K562 (cell line): ENCODE measurements at regions of chr12 and their contacts with region 1.

Region 1: GRCh38 chr12:50763639-50764285 is at the start of gene ATF1:
- DNase-seq: peak; percentile 88 to 97 (median 91)
- ATAC-seq: peak; percentile 87
- H3K4me3 ChIP-seq: peak within 1 kb of the TSS; percentile 84
- H3K27ac ChIP-seq: peak within 1 kb of the TSS; percentile 99
- H3K4me1 ChIP-seq: peaks cover 17 to 18% of the 10 kb centered on the region in 2 experiments
- H3K27me3 ChIP-seq: no peaks in the 10 kb centered on the region
- CTCF ChIP-seq: no peak
- EP300 ChIP-seq: peak; percentile 37; the same call in 1 of the 2 replicates
- POLR2A ChIP-seq: peak; percentile 93
- RAD21 ChIP-seq: no peak
- polyA plus RNA-seq, gene ATF1: 19.8 to 24.5 TPM

Region 2: DNA sequence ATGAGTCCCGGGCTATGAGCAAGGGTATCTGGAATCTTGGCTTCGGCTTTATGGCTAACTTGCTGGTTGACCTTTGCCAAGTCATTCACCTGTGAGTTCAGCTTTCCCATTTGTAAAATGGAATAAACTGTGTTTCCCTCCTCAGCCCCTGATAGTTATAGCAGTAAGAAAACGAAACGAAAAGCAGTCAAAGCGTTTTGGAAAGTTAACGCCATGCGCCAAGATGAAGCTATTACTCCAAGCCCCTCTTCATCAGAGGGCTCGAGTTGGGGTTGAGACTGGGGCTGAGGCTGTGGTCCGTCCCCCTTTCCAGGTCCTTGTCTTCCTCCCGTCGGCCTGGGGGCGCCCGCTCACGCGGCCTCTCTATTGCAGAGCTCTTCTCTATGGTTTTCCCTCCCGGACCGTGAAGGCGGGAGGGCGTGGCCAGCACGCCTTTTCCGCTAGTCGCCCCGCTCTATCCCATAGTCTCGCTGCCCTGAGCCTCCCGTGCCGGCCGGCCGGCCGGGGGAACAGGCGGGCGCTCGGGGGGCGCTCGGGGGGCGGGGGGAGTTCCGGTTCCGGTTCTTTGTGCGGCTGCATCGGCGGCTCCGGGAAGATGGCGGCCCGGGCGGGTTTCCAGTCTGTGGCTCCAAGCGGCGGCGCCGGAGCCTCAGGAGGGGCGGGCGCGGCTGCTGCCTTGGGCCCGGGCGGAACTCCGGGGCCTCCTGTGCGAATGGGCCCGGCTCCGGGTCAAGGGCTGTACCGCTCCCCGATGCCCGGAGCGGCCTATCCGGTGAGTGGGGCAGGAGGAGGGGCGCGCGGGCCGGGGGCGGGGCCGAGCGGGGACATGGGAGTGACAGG is 678.8 kb before region 1 on chr12 and contains the start of gene SMARCD1:
- CTCF ChIA-PET with region 1: no interaction called
- POLR2A ChIA-PET with region 1: no interaction called
- in situ Hi-C with region 1: no loop called
- intact Hi-C with region 1: loop called (anchors 5 kb)
- DNase-seq: peak; percentile 92 to 96 (median 93)
- ATAC-seq: peak; percentile 96
- H3K4me3 ChIP-seq: peak within 1 kb of the TSS; percentile 82
- H3K27ac ChIP-seq: peak within 1 kb of the TSS; percentile 84
- H3K4me1 ChIP-seq: peaks cover 10 to 21% of the 10 kb centered on the region in 2 experiments; a peak in 4 of 5 replicates
- H3K27me3 ChIP-seq: no peaks in the 10 kb centered on the region
- CTCF ChIP-seq: peak; percentile 75 to 88 (median 86)
- EP300 ChIP-seq: peak; percentile 39; the same call in 1 of the 2 replicates
- POLR2A ChIP-seq: peak; percentile 60; the same call in 1 of the 2 replicates
- RAD21 ChIP-seq: peak in 1 of 2 experiments; percentile 20; a peak in 1 of 4 replicates
- polyA plus RNA-seq, gene SMARCD1: 0.86 to 1.5 TPM

Region 3: GRCh38 chr12:50677858-50678257 is 85.9 kb before region 1 on chr12:
- CTCF ChIA-PET with region 1: no interaction called
- POLR2A ChIA-PET with region 1: no interaction called
- in situ Hi-C with region 1: no loop called
- intact Hi-C with region 1: no loop called
- DNase-seq: no peak
- ATAC-seq: no peak
- H3K4me3 ChIP-seq: no peak overlapping the region
- H3K27ac ChIP-seq: no peak overlapping the region
- H3K4me1 ChIP-seq: no peaks in the 10 kb centered on the region
- H3K27me3 ChIP-seq: no peaks in the 10 kb centered on the region
- CTCF ChIP-seq: no peak
- EP300 ChIP-seq: no peak
- POLR2A ChIP-seq: no peak
- RAD21 ChIP-seq: no peak

Region 4: GRCh38 chr12:50776749-50777728 is 13.3 kb after region 1 on chr12:
- CTCF ChIA-PET with region 1: no interaction called
- POLR2A ChIA-PET with region 1: interaction called, 13 read pairs
- in situ Hi-C with region 1: no loop called
- intact Hi-C with region 1: no loop called
- DNase-seq: no peak
- ATAC-seq: no peak
- H3K4me3 ChIP-seq: no peak overlapping the region
- H3K27ac ChIP-seq: no peak overlapping the region
- H3K4me1 ChIP-seq: no peaks in the 10 kb centered on the region; a peak in 2 of 5 replicates
- H3K27me3 ChIP-seq: no peaks in the 10 kb centered on the region
- CTCF ChIP-seq: no peak
- EP300 ChIP-seq: no peak
- POLR2A ChIP-seq: no peak
- RAD21 ChIP-seq: no peak

Region 5: DNA sequence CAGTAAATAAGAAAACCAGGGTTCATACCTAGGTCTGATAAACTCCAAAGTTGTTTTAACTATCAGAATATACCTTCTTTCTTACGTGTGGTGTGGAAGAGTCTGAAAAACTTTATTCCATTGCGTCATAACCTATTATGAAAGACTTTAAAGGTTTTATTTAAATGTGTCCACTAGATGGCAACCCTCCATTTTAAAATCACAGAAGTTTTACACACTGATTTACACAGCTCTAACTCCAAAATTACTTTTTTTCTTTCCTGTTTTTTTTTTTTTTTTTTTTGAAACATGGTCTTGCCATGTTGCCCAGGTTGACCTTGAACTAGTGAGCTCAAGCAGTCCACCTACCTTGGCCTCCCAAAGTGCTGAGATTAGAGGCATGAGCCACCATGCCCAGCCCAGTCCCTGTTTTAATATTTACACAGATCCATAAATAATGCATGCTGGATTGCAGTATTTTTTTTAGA is 61.6 kb after region 1 on chr12:
- CTCF ChIA-PET with region 1: no interaction called
- POLR2A ChIA-PET with region 1: interaction called, 4 read pairs
- in situ Hi-C with region 1: no loop called
- intact Hi-C with region 1: loop called (anchors 1 kb)
- DNase-seq: peak; percentile 20 to 65 (median 27)
- ATAC-seq: peak; percentile 80
- H3K4me3 ChIP-seq: no peak overlapping the region
- H3K27ac ChIP-seq: peak overlapping the region; percentile 40; the same call in 1 of the 3 replicates
- H3K4me1 ChIP-seq: peaks cover 0 to 3% of the 10 kb centered on the region in 2 experiments; a peak in 1 of 5 replicates
- H3K27me3 ChIP-seq: no peaks in the 10 kb centered on the region
- CTCF ChIP-seq: peak in 2 of 3 experiments; percentile 40 to 65; a peak in 3 of 6 replicates
- EP300 ChIP-seq: 0 out of 2 replicates have a peak, but pooled peaks have one; percentile 4
- POLR2A ChIP-seq: no peak
- RAD21 ChIP-seq: peak; percentile 68 to 86

Region 6: GRCh38 chr12:50986966-50987737 is 223.4 kb after region 1 on chr12:
- CTCF ChIA-PET with region 1: interaction called, 3 read pairs
- POLR2A ChIA-PET with region 1: no interaction called
- in situ Hi-C with region 1: no loop called
- intact Hi-C with region 1: loop called (anchors 1 kb)
- DNase-seq: peak; percentile 27 to 56 (median 40)
- ATAC-seq: peak; percentile 90
- H3K4me3 ChIP-seq: no peak overlapping the region
- H3K27ac ChIP-seq: no peak overlapping the region
- H3K4me1 ChIP-seq: no peaks in the 10 kb centered on the region
- H3K27me3 ChIP-seq: no peaks in the 10 kb centered on the region
- CTCF ChIP-seq: peak; percentile 58 to 72 (median 62)
- EP300 ChIP-seq: no peak
- POLR2A ChIP-seq: no peak
- RAD21 ChIP-seq: peak; percentile 86 to 88

Region 7: GRCh38 chr12:51341259-51342007 is 577.7 kb after region 1 on chr12:
- CTCF ChIA-PET with region 1: no interaction called
- POLR2A ChIA-PET with region 1: no interaction called
- in situ Hi-C with region 1: no loop called
- intact Hi-C with region 1: loop called (anchors 5 kb)
- DNase-seq: peak; percentile 71 to 82 (median 72)
- ATAC-seq: peak; percentile 85
- H3K4me3 ChIP-seq: no peak overlapping the region
- H3K27ac ChIP-seq: peak overlapping the region; percentile 45; the same call in 2 of the 3 replicates
- H3K4me1 ChIP-seq: peaks cover 11 to 16% of the 10 kb centered on the region in 2 experiments; a peak in 4 of 5 replicates
- H3K27me3 ChIP-seq: no peaks in the 10 kb centered on the region
- CTCF ChIP-seq: peak; percentile 83 to 99 (median 98)
- EP300 ChIP-seq: no peak
- POLR2A ChIP-seq: no peak
- RAD21 ChIP-seq: peak; percentile 98